IMR-90 (cell line): ENCODE measurements at regions of chr6 and their contacts with region 1.

Region 1: DNA sequence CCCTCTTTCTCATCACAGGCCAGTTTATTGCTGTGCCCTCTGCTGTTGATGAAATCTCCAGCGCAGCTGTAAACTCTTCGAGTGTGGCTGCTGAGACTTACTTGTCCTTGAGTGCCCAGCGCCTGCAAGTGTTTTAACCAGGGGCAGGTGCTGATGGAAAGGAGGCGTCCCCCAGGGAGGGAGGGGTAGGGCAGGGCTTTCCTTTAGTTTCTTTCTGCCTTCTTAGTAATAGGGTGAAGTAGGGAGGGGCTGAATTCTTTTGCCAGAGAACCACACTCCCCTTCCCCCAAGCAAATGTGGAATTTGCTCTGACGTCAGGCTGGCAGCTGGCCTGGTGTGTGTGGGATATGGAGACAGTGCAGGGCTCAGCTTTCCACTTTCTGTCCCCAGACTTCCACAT is 61.2 kb downstream of the IGF2R start:
- DNase-seq: peak; percentile 97
- ATAC-seq: peak; percentile 92
- H3K4me3 ChIP-seq: no peak overlapping the region
- H3K27ac ChIP-seq: peak overlapping the region; percentile 43; the same call in 1 of the 2 replicates
- H3K4me1 ChIP-seq: peaks cover 6% of the 10 kb centered on the region
- H3K27me3 ChIP-seq: no peaks in the 10 kb centered on the region
- CTCF ChIP-seq: no peak
- POLR2A ChIP-seq: no peak
- RAD21 ChIP-seq: peak; percentile 24; the same call in 1 of the 2 replicates

Region 2: GRCh38 chr6:159761873-159762680 is 268.0 kb before region 1 on chr6 and contains the start of gene ACAT2:
- CTCF ChIA-PET with region 1: no interaction called
- POLR2A ChIA-PET with region 1: no interaction called
- dilution Hi-C with region 1: no loop called
- in situ Hi-C with region 1: no loop called
- intact Hi-C with region 1: no loop called
- DNase-seq: peak; percentile 92
- ATAC-seq: peak; percentile 96
- H3K4me3 ChIP-seq: peak within 1 kb of the TSS; percentile 79
- H3K27ac ChIP-seq: peak within 1 kb of the TSS; percentile 94
- H3K4me1 ChIP-seq: peaks cover 20% of the 10 kb centered on the region
- H3K27me3 ChIP-seq: no peaks in the 10 kb centered on the region
- CTCF ChIP-seq: no peak
- POLR2A ChIP-seq: peak; percentile 39; the same call in 1 of the 2 replicates
- RAD21 ChIP-seq: no peak
- total RNA-seq, gene ACAT2: 45.2 and 50.3 TPM in 2 replicates

Region 3: GRCh38 chr6:159806021-159806458 is 224.1 kb before region 1 on chr6:
- CTCF ChIA-PET with region 1: no interaction called
- POLR2A ChIA-PET with region 1: interaction called, 10 read pairs
- dilution Hi-C with region 1: no loop called
- in situ Hi-C with region 1: no loop called
- intact Hi-C with region 1: no loop called
- DNase-seq: no peak
- ATAC-seq: no peak
- H3K4me3 ChIP-seq: no peak overlapping the region
- H3K27ac ChIP-seq: no peak overlapping the region
- H3K4me1 ChIP-seq: no peaks in the 10 kb centered on the region; the same call in 1 of the 2 replicates
- H3K27me3 ChIP-seq: no peaks in the 10 kb centered on the region
- CTCF ChIP-seq: no peak
- POLR2A ChIP-seq: no peak
- RAD21 ChIP-seq: no peak

Region 4: DNA sequence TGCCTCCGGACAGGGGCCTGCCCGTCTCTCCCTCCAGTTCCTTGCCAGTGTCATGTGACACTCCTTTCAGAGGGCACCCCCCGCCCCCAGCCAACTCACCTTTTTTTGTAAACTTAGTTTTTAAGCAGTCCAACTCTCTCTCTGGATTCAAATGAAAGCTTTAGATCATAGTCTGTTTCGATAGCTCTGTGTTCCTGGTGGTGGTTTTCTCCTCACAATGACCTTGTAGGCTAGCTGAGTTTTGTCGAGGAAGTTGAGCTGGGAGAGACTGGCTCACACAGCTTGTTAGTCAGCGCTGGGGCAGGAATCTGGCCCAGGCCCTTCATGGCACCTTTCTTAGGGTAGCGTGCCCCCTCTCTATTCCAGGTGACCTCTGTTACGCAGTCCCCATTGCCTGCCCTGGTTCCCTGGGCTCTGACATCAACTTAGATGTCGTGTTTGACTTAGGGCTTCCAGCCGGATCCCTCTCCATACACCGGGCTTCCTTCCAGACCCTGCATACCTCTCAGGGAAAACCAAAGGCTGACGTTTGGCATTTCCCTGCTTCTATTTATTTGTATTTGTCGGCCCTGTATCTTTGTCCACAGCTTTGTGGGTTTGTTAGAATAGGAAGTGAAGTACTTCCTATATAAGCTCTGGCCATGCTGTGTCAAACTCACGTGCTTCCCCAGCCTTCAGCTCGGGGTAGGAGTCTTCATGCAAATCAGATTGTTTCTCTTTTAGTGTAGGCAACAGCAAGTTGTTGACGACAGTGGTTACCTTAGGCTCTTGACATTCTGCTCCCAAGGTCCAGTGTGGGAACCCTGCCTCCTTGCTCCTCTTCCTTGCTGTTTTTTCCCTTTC is 48.5 kb before region 1 on chr6:
- CTCF ChIA-PET with region 1: interaction called, 3 read pairs
- POLR2A ChIA-PET with region 1: no interaction called
- dilution Hi-C with region 1: no loop called
- in situ Hi-C with region 1: no loop called
- intact Hi-C with region 1: loop called (anchors 2 kb)
- DNase-seq: peak; percentile 91
- ATAC-seq: peak; percentile 59
- H3K4me3 ChIP-seq: no peak overlapping the region
- H3K27ac ChIP-seq: peak overlapping the region; percentile 35; the same call in 1 of the 2 replicates
- H3K4me1 ChIP-seq: peaks cover 38% of the 10 kb centered on the region
- H3K27me3 ChIP-seq: no peaks in the 10 kb centered on the region
- CTCF ChIP-seq: no peak
- POLR2A ChIP-seq: no peak
- RAD21 ChIP-seq: no peak

Region 5: DNA sequence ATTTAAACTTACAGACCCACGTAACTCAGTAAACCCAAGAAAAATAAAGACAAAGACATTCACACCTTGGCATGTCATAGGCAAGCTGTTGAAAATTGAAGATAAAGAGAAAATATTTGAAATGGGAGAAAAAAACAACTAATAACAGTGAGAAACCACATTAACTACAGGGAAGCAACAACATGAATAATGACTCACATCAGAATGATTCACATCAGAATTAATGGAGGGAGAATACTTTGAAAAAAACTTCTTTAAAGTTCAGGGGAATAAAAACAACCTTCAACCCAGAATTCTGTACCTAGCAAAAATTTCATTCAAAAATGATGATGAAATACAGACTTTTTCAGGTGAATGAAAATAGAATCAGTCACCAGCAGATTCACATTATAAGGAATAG is 285.2 kb after region 1 on chr6:
- CTCF ChIA-PET with region 1: no interaction called
- POLR2A ChIA-PET with region 1: no interaction called
- dilution Hi-C with region 1: no loop called
- in situ Hi-C with region 1: no loop called
- intact Hi-C with region 1: no loop called
- DNase-seq: no peak
- ATAC-seq: no peak
- H3K4me3 ChIP-seq: no peak overlapping the region
- H3K27ac ChIP-seq: no peak overlapping the region
- H3K4me1 ChIP-seq: no peaks in the 10 kb centered on the region
- H3K27me3 ChIP-seq: no peaks in the 10 kb centered on the region
- CTCF ChIP-seq: no peak
- POLR2A ChIP-seq: no peak
- RAD21 ChIP-seq: no peak